SK-N-SH (cell line): ENCODE measurements at regions of chr1 and their contacts with region 1.

Region 1: DNA sequence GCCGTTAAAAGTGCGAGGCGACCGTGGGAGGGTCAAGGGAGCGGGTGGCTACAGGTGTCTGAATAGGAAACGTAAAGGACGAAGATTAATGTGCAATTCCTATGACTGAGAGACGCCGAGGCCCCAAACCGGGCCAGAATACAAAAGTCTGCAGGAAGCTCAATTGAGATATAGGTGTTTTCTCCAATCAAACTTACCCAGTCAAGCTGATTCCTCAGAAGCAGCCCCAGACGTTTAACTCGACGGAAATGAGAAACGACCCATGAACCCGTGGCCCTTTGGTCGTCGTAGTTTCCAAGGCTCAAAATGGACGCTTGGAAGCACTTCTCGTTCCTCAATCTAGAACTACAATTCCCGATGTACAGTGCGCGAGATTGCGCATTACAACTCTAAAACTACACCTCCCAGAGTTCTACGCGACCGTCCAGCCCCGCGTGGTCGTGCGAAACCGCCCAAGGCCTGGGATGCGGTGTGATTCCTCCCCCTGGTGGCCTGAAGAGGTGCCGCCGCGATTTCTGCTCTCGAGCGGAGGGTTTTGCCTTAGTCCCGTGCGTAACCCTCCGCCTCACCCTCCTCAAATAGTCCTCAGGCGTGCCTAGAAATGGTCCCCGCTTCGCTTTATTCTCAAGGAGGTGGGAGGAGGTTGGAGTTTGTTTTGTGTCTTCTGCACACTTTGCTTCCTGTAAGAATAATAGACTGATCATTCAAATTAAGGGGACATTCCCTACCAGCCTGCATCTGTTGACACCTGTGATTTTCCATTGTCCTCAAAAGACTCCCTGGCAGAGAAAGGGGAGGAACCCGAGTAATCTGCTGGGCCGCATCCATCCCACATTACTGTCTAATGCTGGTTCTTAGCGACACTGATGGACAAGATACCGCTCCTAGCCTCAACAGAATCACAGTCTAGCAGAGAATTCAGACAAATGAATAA is at the start of gene PAFAH2:
- DNase-seq: peak; percentile 91
- H3K4me3 ChIP-seq: peak within 1 kb of the TSS; percentile 57 to 84
- H3K27ac ChIP-seq: peak within 1 kb of the TSS; percentile 60 to 64; a peak in 3 of 4 replicates
- H3K4me1 ChIP-seq: peaks cover 5 to 21% of the 10 kb centered on the region in 2 experiments; a peak in 3 of 4 replicates
- H3K27me3 ChIP-seq: no peaks in the 10 kb centered on the region
- CTCF ChIP-seq: peak; percentile 95
- EP300 ChIP-seq: peak in 1 of 2 experiments; percentile 49; a peak in 1 of 4 replicates
- RAD21 ChIP-seq: peak; percentile 99
- polyA plus RNA-seq, gene PAFAH2: 10.8 and 16.0 TPM in 2 replicates

Region 2: DNA sequence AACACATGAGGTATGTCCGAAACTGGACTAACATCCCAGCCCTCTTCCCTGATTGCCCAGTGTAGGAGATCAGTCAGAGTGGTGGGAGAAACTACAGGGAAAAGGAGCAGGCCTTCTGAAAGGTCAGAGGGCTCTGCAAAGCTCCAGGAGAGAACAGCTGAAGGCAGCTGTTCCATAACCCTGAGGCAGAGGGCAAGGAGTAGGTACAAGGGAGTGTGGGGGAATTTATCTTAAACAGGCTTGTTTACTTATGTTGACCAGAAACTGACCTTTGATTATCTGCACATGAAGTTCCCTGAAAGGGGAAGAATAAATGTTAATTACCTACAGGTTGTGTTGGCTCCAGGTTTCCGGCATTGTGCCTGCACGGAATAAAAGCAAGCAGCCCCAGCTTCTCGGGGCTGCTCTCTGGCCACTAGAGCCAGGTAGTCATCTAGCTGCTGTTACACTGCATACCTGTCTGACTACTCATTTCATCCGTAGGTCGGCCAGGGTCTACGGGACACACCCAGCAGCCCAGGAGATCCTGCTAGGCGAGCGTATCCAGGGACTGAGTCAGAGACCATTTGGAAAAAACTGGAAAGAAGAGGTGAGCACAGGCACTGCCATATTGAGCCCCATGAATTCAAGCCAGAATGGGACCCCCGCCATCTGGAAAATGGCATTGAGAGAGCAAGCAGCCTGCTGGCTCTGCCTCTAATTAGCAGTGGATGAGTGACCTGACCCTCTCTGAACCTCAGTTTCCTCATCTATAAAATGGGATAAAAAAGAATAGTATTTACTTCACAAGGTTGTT is 107.7 kb before region 1 on chr1:
- CTCF ChIA-PET with region 1: interaction called, 344 read pairs
- POLR2A ChIA-PET with region 1: interaction called, 27 read pairs
- DNase-seq: no peak
- H3K4me3 ChIP-seq: no peak overlapping the region
- H3K27ac ChIP-seq: no peak overlapping the region
- H3K4me1 ChIP-seq: peaks cover 0 to 20% of the 10 kb centered on the region in 2 experiments; a peak in 3 of 4 replicates
- H3K27me3 ChIP-seq: no peaks in the 10 kb centered on the region
- CTCF ChIP-seq: no peak
- EP300 ChIP-seq: no peak
- RAD21 ChIP-seq: no peak

Region 3: DNA sequence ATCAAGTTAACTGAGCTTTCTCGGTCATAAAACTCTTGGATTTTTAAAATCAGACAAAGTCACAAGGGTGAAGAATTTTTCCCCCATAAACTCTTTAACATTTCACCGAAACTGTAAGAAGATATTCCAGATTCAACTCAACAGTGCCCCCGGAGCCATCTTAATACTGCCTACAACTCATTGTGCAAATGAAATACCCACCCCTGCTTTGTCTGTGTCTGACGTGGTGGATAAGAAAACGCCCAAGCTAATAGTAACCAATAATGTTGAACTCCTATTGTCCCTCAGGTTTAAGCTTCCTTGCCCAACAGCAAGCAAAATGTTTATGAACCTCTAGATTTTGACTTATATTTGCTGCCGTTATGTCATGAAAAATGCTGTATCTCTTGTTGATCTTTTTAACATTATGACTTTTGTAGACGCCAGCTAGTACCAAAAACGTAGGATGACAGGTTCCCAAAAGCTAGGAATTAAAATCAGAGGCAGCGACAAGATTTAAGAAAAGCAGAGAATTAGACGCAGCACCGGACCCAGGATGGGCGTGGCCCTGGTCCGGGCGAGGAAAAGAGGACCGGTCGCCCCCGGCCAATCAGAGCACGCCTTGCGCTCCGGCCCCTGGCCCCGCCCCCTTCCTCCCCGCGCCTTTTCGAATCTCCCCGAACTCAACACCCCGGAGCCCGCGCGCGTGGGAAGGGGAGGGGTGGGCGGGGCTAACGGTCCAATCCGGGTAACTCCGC is 93.0 kb before region 1 on chr1:
- CTCF ChIA-PET with region 1: interaction called, 344 read pairs
- POLR2A ChIA-PET with region 1: interaction called, 16 read pairs
- DNase-seq: peak; percentile 94
- H3K4me3 ChIP-seq: peak overlapping the region; percentile 85 to 92
- H3K27ac ChIP-seq: peak overlapping the region; percentile 84 to 92
- H3K4me1 ChIP-seq: peaks cover 13% of the 10 kb centered on the region in 2 experiments; a peak in 3 of 4 replicates
- H3K27me3 ChIP-seq: no peaks in the 10 kb centered on the region
- CTCF ChIP-seq: peak; percentile 51
- EP300 ChIP-seq: no peak
- RAD21 ChIP-seq: no peak

Region 4: GRCh38 chr1:25927521-25928265 is 70.4 kb before region 1 on chr1:
- CTCF ChIA-PET with region 1: interaction called, 8 read pairs
- POLR2A ChIA-PET with region 1: interaction called, 16 read pairs
- DNase-seq: peak; percentile 74
- H3K4me3 ChIP-seq: no peak overlapping the region
- H3K27ac ChIP-seq: peak overlapping the region in 1 of 2 experiments; percentile 98; a peak in 2 of 4 replicates
- H3K4me1 ChIP-seq: peaks cover 0 to 24% of the 10 kb centered on the region in 2 experiments; a peak in 1 of 4 replicates
- H3K27me3 ChIP-seq: no peaks in the 10 kb centered on the region
- CTCF ChIP-seq: no peak
- EP300 ChIP-seq: no peak
- RAD21 ChIP-seq: no peak

Region 5: DNA sequence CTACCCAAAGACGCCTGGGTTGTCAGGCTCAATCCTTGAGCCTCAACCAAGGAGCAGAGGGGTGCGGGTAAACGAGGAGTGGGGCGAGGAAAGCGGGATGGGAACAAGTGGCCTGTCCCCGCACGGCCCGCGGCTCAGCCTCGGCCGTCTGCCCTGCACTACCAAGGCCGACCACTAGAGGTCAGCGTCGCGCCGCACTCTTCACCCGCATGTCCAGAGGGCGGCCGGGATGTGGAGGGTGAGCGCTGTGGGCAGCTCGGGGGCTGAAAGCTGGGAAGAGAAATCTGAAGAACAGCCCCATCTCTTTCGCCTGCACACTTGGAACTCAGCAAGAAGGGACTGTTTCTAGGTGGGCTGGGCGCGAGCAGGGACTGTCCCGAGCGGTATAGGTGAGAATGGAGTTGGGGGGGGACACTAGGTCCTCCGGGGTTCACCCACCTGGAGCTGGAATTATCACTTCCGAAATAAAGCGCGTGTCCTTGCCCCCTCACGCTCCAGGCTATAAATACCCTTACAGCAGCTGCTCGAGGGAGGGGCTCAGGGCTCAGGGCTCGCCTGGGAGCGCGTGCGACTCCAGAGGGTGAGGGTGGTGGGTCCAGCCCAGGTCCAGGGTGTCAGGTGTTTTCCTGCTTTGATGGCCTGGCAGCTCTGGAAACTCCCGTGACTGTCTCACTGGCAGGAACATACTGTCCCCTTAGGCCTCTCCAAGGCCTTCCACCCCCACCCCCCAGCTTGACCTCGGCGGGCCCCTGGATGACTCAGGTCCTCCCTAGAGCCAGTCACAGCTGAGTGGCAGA is 38.1 kb after region 1 on chr1:
- CTCF ChIA-PET with region 1: interaction called, 10 read pairs
- POLR2A ChIA-PET with region 1: no interaction called
- DNase-seq: peak; percentile 95
- H3K4me3 ChIP-seq: peak overlapping the region; percentile 87 to 99
- H3K27ac ChIP-seq: peak overlapping the region in 1 of 2 experiments; percentile 69; a peak in 1 of 4 replicates
- H3K4me1 ChIP-seq: peaks cover 0 to 12% of the 10 kb centered on the region in 2 experiments; a peak in 1 of 4 replicates
- H3K27me3 ChIP-seq: peaks cover 5% of the 10 kb centered on the region; the same call in 1 of the 2 replicates
- CTCF ChIP-seq: peak; percentile 95
- EP300 ChIP-seq: no peak
- RAD21 ChIP-seq: peak; percentile 84